HCT116 (cell line): ENCODE measurements at regions of chr3 and their contacts with region 1.

Region 1: DNA sequence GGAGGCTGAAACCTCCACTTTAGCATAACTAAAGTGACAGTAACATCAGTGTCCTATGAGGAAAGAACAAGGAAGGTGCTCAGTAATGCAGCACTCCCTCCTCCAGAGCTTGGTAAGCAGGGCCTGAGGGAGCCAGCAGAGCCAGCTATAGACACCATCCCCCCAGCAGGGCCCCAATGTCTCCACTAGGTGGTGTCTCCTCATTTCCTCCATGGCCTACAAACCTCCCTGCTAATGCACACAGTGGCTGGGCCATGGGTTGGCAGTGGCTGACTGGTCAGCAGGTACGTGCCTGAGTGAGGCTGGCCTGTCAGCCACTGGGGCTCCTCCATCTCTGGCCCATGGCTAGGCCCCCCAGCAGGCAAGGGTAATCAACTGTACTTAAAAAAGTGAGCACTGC is 13.6 kb downstream of the MRPS25 start:
- DNase-seq: peak; percentile 32
- ATAC-seq: peak; percentile 99
- H3K4me3 ChIP-seq: no peak overlapping the region
- H3K27ac ChIP-seq: peak overlapping the region; percentile 7; the same call in 1 of the 2 replicates
- H3K4me1 ChIP-seq: no peaks in the 10 kb centered on the region
- H3K27me3 ChIP-seq: no peaks in the 10 kb centered on the region
- CTCF ChIP-seq: peak; percentile 25 to 93 (median 73); a peak in 5 of 6 replicates
- POLR2A ChIP-seq: no peak
- RAD21 ChIP-seq: peak; percentile 36

Region 2: GRCh38 chr3:15064835-15065549 is 13.5 kb after region 1 on chr3 and contains the start of gene MRPS25:
- CTCF ChIA-PET with region 1: interaction called, 10 read pairs
- POLR2A ChIA-PET with region 1: interaction called, 4 read pairs
- RAD21 ChIA-PET with region 1: no interaction called
- intact Hi-C with region 1: no loop called
- DNase-seq: peak; percentile 79
- ATAC-seq: peak; percentile 97
- H3K4me3 ChIP-seq: peak within 1 kb of the TSS; percentile 79 to 95
- H3K27ac ChIP-seq: peak within 1 kb of the TSS; percentile 77
- H3K4me1 ChIP-seq: peaks cover 11 to 17% of the 10 kb centered on the region in 2 experiments
- H3K27me3 ChIP-seq: no peaks in the 10 kb centered on the region
- CTCF ChIP-seq: no peak
- POLR2A ChIP-seq: peak; percentile 95
- RAD21 ChIP-seq: no peak
- total RNA-seq, gene MRPS25: 58.3 TPM